A673 (cell line): ENCODE measurements at regions of chr5 and their contacts with region 1.

Region 1: DNA sequence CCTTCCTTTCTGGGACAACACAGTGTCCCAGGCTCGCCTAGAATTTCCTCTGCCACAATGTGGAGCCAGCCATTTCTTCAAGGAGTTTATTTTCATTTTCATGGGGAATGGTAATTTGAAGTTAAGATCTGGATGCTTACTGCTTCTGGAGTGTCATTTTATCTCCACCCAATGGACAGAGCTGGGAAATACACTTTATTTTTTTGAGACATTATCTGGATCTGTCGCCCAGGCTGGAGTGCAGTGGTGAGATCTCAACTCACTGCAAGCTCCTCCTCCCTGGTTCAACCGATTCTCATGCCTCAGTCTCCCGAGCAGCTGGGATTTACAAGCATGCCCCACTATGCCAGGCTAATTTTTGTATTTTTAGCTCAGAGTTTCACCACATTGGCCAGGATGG is 12.7 kb upstream of the THG1L start:
- DNase-seq: peak; percentile 67
- H3K4me3 ChIP-seq: no peak overlapping the region
- H3K27ac ChIP-seq: no peak overlapping the region
- H3K4me1 ChIP-seq: no peaks in the 10 kb centered on the region
- H3K27me3 ChIP-seq: no peaks in the 10 kb centered on the region
- CTCF ChIP-seq: peak; percentile 56

Region 2: GRCh38 chr5:157328277-157328912 is 390.1 kb before region 1 on chr5:
- CTCF ChIA-PET with region 1: interaction called, 7 read pairs
- POLR2A ChIA-PET with region 1: no interaction called
- intact Hi-C with region 1: loop called (anchors 1 kb)
- DNase-seq: peak; percentile 76
- H3K4me3 ChIP-seq: peak overlapping the region; percentile 14
- H3K27ac ChIP-seq: no peak overlapping the region
- H3K4me1 ChIP-seq: no peaks in the 10 kb centered on the region
- H3K27me3 ChIP-seq: no peaks in the 10 kb centered on the region
- CTCF ChIP-seq: peak; percentile 83

Region 3: DNA sequence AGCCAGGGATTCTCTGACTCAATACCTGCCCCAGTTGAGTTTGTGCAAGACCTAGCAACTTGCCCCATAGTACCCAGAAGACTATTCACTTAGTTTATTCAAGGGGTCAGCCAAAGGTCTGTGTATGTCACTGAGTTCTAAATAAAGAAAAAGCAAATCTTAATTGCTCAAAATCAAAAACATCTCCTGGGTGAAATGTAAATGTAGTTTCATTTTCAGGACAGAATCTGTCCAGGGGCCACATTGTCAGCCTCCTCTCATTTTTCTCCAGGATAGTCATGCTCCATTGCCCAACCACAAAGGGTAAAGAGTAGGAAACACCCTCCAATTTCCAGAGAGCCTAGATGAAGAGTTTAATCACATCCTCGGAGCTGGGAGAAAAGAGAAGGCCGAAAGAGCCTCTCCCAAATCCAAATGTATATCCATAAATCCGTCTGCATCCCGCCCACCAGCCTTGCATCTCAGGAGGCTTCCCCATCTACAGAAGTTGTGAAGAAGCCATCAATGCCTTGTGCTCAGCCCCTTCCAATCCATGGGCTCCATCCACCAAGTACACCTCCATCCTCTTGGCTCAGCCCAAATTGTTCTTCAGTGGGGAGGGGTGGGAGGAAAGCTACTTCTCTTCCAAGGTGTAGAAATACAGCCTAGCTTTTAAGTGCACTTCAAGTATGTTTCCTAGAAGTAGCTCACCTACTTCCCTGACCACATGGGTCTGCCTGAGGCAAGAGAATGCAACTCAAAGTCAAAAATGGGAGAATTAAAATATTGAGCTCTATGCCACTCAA is 169.8 kb before region 1 on chr5:
- CTCF ChIA-PET with region 1: no interaction called
- POLR2A ChIA-PET with region 1: no interaction called
- intact Hi-C with region 1: no loop called
- DNase-seq: no peak
- H3K4me3 ChIP-seq: no peak overlapping the region
- H3K27ac ChIP-seq: no peak overlapping the region
- H3K4me1 ChIP-seq: no peaks in the 10 kb centered on the region
- H3K27me3 ChIP-seq: no peaks in the 10 kb centered on the region
- CTCF ChIP-seq: no peak

Region 4: DNA sequence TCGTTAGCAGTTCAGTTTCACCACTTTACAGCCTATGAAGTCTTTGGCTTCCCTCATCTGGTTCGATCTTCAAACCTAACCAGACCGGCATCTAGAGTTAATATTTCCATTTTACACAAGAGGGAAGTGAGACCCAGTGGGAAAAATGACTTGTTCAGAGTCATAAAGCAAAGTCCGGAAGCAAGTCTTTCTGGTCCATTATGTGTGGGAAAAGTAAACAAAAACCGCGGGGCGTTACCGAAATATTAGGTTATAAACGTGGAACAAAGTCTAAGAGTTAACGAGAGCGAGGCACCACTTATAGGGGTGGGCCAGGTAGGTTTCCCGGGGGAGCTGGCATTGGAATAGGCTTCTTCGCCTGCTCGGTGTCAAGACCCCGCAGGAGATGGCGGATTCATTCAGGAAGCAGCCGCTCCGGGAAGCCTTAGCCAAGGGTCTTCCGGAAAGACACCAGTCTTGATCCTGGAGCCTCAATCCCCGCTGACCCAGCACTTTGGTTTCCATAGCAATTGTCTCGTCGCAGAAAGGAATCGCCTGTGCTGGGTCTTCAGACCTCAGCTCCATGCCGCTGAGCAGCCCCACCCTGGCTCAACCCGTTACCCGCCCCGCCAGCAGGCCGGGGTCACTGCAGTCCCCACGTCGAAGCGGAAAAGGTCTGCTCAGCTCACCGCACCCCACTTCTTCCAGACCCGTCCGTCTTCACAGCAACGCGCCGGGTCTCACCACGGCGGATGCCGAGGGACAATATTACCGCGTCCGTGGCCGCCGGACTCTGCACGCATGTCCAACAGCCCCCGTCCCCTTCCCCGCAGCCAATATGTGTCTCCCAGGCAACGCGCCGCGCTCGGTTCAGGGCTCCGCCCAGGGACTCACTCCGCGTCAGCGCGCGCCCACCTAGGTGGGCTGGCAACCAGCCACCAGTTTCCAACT is 47.6 kb before region 1 on chr5 and contains the start of gene C5orf52:
- CTCF ChIA-PET with region 1: interaction called, 17 read pairs
- POLR2A ChIA-PET with region 1: no interaction called
- intact Hi-C with region 1: loop called (anchors 5 kb)
- DNase-seq: peak; percentile 37
- H3K4me3 ChIP-seq: peak within 1 kb of the TSS; percentile 47
- H3K27ac ChIP-seq: no peak within 1 kb of the TSS
- H3K4me1 ChIP-seq: peaks cover 7% of the 10 kb centered on the region
- H3K27me3 ChIP-seq: peaks cover 10% of the 10 kb centered on the region
- CTCF ChIP-seq: no peak
- total RNA-seq, gene C5orf52: not detected in 2 replicates